ENCODE measurements at regions of chr9 and their contacts with region 1.

Region 1: GRCh38 chr9:89010526-89011111 is 19.4 kb downstream of the S1PR3 start:
- DNase-seq: no peak

Region 2: GRCh38 chr9:88927510-88927909 is 83.1 kb before region 1 on chr9:
- intact Hi-C with region 1: no loop called
- DNase-seq: no peak

Region 3: GRCh38 chr9:89278997-89279739 is 268.5 kb after region 1 on chr9:
- intact Hi-C with region 1: loop called in 1 of 2 experiments (anchors 10 kb)
- DNase-seq: no peak

Measured in posterior vena cava (tissue), 2 donors.